Endothelial cell of umbilical vein (primary cell): ENCODE measurements at regions of chr10 and their contacts with region 1.

Region 1: GRCh38 chr10:58531084-58531695 is 18.5 kb downstream of the BICC1 start:
- DNase-seq: peak; percentile 68
- H3K4me3 ChIP-seq: no peak overlapping the region
- H3K27ac ChIP-seq: no peak overlapping the region
- H3K4me1 ChIP-seq: no peaks in the 10 kb centered on the region
- H3K27me3 ChIP-seq: no peaks in the 10 kb centered on the region
- CTCF ChIP-seq: peak; percentile 64 to 75
- POLR2A ChIP-seq: no peak

Region 2: GRCh38 chr10:58189269-58189668 is 341.9 kb before region 1 on chr10:
- CTCF ChIA-PET with region 1: no interaction called
- POLR2A ChIA-PET with region 1: no interaction called
- dilution Hi-C with region 1: no loop called
- intact Hi-C with region 1: no loop called
- DNase-seq: no peak
- H3K4me3 ChIP-seq: no peak overlapping the region
- H3K27ac ChIP-seq: no peak overlapping the region
- H3K4me1 ChIP-seq: no peaks in the 10 kb centered on the region
- H3K27me3 ChIP-seq: peaks cover 0 to 2% of the 10 kb centered on the region in 2 experiments
- CTCF ChIP-seq: no peak
- POLR2A ChIP-seq: no peak

Region 3: GRCh38 chr10:58299580-58299979 is 231.6 kb before region 1 on chr10:
- CTCF ChIA-PET with region 1: interaction called, 13 read pairs
- POLR2A ChIA-PET with region 1: no interaction called
- dilution Hi-C with region 1: no loop called
- intact Hi-C with region 1: no loop called
- DNase-seq: peak; percentile 59
- H3K4me3 ChIP-seq: no peak overlapping the region
- H3K27ac ChIP-seq: no peak overlapping the region
- H3K4me1 ChIP-seq: no peaks in the 10 kb centered on the region
- H3K27me3 ChIP-seq: peaks cover 4 to 9% of the 10 kb centered on the region in 2 experiments
- CTCF ChIP-seq: peak; percentile 66 to 75
- POLR2A ChIP-seq: no peak

Region 4: GRCh38 chr10:58513188-58514110 is 17.7 kb before region 1 on chr10:
- CTCF ChIA-PET with region 1: interaction called, 18 read pairs
- POLR2A ChIA-PET with region 1: no interaction called
- dilution Hi-C with region 1: no loop called
- intact Hi-C with region 1: no loop called
- DNase-seq: peak; percentile 7
- H3K4me3 ChIP-seq: peak overlapping the region; percentile 23 to 35 (median 29)
- H3K27ac ChIP-seq: no peak overlapping the region
- H3K4me1 ChIP-seq: peaks cover 10% of the 10 kb centered on the region
- H3K27me3 ChIP-seq: peaks cover 16 to 55% of the 10 kb centered on the region in 2 experiments
- CTCF ChIP-seq: no peak
- POLR2A ChIP-seq: no peak

Region 5: GRCh38 chr10:58543141-58543540 is 12.0 kb after region 1 on chr10:
- CTCF ChIA-PET with region 1: interaction called, 17 read pairs
- POLR2A ChIA-PET with region 1: no interaction called
- dilution Hi-C with region 1: no loop called
- intact Hi-C with region 1: no loop called
- DNase-seq: no peak
- H3K4me3 ChIP-seq: no peak overlapping the region
- H3K27ac ChIP-seq: no peak overlapping the region
- H3K4me1 ChIP-seq: no peaks in the 10 kb centered on the region
- H3K27me3 ChIP-seq: no peaks in the 10 kb centered on the region
- CTCF ChIP-seq: no peak
- POLR2A ChIP-seq: no peak

Region 6: DNA sequence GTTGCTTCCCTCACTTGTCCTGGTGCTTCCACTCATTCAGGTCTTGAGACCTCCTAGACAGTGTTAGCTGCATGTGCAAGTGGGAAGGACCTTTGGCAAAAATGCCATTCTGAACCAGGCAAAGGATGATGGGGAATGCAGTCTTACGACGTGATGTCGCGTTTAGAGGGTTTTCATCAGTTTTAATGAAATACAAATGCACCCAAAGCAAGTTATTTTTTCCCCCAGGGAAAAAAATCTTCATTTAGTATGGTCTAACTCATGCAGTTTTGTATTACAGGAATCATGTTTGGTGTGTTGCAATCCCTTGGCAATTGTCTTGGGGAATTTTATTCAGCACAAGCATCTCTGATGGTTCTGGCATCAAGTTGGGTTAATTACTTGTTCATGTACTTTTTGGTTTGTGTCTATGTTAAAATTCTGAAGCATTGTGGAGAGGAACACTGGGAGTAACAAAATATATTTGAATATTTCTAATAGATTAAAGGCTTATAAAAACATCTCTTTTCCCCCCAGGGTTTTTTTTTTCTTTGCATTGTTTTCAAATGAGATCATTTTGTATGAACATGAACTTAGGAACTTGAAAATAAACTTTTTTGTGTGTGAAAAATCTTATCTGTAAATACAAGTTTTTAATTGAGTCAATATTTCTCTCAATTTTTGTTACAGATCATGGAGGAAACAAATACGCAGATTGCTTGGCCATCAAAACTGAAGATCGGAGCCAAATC is 170.4 kb after region 1 on chr10:
- CTCF ChIA-PET with region 1: no interaction called
- POLR2A ChIA-PET with region 1: no interaction called
- dilution Hi-C with region 1: no loop called
- intact Hi-C with region 1: loop called (anchors 10 kb)
- DNase-seq: no peak
- H3K4me3 ChIP-seq: no peak overlapping the region
- H3K27ac ChIP-seq: no peak overlapping the region
- H3K4me1 ChIP-seq: no peaks in the 10 kb centered on the region
- H3K27me3 ChIP-seq: no peaks in the 10 kb centered on the region
- CTCF ChIP-seq: no peak
- POLR2A ChIP-seq: no peak

Region 7: GRCh38 chr10:58952747-58953466 is 421.7 kb after region 1 on chr10:
- CTCF ChIA-PET with region 1: no interaction called
- POLR2A ChIA-PET with region 1: no interaction called
- dilution Hi-C with region 1: no loop called
- intact Hi-C with region 1: loop called (anchors 10 kb)
- DNase-seq: peak; percentile 47
- H3K4me3 ChIP-seq: no peak overlapping the region
- H3K27ac ChIP-seq: no peak overlapping the region
- H3K4me1 ChIP-seq: no peaks in the 10 kb centered on the region
- H3K27me3 ChIP-seq: no peaks in the 10 kb centered on the region
- CTCF ChIP-seq: peak; percentile 42 to 64
- POLR2A ChIP-seq: no peak

Region 8: GRCh38 chr10:59234816-59235429 is 703.7 kb after region 1 on chr10:
- CTCF ChIA-PET with region 1: interaction called, 4 read pairs
- POLR2A ChIA-PET with region 1: no interaction called
- dilution Hi-C with region 1: no loop called
- intact Hi-C with region 1: loop called (anchors 2 kb)
- DNase-seq: peak; percentile 41
- H3K4me3 ChIP-seq: no peak overlapping the region
- H3K27ac ChIP-seq: no peak overlapping the region
- H3K4me1 ChIP-seq: no peaks in the 10 kb centered on the region
- H3K27me3 ChIP-seq: no peaks in the 10 kb centered on the region
- CTCF ChIP-seq: peak; percentile 41 to 56
- POLR2A ChIP-seq: no peak